Astrocyte of the cerebellum (primary cell): ENCODE measurements at regions of chr1 and their contacts with region 1.

Region 1: DNA sequence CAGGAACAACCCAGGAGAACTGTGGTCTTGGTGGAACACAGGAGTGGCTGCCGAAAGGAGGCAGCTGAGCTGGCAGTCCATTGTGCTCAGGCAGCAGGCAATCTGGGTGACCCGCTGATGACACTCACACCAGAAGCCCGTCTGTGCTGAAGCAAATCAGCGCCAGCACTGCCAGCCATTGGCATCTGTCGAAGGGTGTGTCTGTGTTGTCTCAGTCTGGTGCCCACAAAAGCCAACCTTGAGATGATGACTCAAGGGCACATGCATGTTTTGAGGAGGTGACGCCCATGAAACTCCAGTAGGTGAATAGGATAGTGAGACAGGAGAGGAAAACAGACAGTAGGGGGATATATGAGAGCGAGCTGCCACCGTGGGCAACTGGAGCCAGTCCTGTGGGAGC is 167.3 kb downstream of the KAZN start:
- DNase-seq: no peak
- H3K4me3 ChIP-seq: no peak overlapping the region
- CTCF ChIP-seq: no peak

Region 2: GRCh38 chr1:14602136-14602535 is 163.6 kb before region 1 on chr1:
- in situ Hi-C with region 1: loop called (anchors 10 kb)
- DNase-seq: no peak
- H3K4me3 ChIP-seq: peak overlapping the region; percentile 21
- CTCF ChIP-seq: no peak